ENCODE measurements at regions of chr6 and their contacts with region 1.

Region 1: DNA sequence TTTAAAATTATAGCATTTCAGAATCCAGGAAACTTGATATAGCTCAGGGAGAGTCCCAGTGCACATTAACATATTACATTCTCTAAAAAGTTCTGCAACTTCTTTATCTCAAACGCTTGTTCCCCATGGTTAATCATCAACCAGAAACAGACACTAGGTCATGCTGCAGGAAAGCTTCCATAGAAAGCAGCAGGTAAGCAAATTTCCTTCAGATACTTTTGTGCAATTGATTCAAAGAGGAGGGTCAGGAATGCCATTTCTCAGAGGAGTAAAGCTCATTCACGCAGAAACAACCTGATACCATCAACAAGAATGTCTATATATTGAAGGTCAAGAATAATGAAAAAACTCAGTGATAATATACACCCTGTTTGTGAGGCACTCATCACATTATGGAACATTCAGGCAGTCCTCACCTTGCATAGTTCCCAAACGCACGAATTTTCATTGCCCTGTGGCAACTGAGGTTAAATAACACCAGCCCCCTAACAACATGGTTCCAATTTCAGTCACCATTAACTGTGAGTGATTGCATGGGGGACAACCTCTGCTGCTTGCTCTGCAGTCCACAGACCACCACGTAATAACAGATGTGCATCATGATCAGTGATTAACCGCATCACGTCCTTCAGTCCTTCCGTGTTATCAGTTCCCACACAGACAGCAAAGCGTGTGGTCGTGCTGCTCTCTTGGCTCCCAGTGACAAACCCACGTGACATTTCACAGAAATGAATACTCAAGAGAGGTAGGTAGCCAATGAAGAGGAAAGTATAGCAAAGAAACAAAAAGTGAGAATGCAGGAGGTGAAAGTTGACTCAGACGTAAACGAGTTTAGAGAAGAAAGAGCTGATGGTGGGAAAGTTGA is 95.7 kb downstream of the LY86 start:
- DNase-seq: no peak
- H3K4me3 ChIP-seq: no peak overlapping the region
- H3K27ac ChIP-seq: no peak overlapping the region
- H3K4me1 ChIP-seq: peaks cover 18% of the 10 kb centered on the region
- H3K27me3 ChIP-seq: no peaks in the 10 kb centered on the region
- CTCF ChIP-seq: no peak
- POLR2A ChIP-seq: no peak

Region 2: DNA sequence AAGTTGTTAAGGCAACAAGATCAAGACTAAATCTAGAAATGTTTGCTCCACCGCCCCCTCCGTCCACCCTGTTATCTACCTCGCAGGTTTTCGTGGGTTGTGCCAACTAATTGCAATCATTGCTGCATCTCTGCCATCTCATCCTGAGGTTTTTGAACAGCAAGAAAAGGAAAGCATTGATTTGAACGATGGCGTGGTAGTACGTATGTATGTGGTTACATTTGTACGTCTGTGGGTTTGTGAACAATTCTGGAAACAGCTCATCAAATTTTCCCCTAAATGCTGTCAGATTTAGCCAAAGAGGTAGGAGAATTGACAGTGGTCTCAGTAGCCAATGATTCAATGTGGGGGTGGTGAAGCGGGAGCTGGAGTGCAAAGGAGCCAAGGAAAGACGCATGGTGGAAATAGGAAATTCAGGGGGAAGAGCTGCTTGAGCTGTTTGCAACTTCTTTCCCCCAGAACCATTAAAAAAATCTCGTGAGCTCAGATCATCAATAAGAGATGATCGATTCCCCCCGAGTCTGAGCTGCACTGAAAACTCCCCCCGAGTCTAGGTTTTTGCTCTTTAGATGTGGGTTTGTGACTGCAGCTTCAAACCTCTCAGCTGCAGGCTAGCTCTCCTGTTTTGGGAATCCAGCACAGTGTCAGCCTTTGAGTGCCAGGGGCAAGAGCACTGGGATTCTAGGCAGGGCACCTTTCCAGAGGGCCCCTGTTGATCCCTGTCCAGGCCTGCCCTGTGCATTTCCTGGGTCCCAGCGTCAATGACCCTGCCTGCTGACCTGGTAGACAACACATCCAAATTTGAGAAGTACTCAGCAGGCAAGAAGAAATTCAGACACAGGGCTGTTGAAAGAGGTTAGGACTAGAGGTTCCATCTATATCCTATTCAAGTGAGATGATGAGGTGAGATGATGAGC is 168.3 kb before region 1 on chr6:
- intact Hi-C with region 1: no loop called
- DNase-seq: no peak
- H3K4me3 ChIP-seq: no peak overlapping the region
- H3K27ac ChIP-seq: no peak overlapping the region
- H3K4me1 ChIP-seq: no peaks in the 10 kb centered on the region
- H3K27me3 ChIP-seq: no peaks in the 10 kb centered on the region
- CTCF ChIP-seq: no peak
- POLR2A ChIP-seq: no peak

Region 3: DNA sequence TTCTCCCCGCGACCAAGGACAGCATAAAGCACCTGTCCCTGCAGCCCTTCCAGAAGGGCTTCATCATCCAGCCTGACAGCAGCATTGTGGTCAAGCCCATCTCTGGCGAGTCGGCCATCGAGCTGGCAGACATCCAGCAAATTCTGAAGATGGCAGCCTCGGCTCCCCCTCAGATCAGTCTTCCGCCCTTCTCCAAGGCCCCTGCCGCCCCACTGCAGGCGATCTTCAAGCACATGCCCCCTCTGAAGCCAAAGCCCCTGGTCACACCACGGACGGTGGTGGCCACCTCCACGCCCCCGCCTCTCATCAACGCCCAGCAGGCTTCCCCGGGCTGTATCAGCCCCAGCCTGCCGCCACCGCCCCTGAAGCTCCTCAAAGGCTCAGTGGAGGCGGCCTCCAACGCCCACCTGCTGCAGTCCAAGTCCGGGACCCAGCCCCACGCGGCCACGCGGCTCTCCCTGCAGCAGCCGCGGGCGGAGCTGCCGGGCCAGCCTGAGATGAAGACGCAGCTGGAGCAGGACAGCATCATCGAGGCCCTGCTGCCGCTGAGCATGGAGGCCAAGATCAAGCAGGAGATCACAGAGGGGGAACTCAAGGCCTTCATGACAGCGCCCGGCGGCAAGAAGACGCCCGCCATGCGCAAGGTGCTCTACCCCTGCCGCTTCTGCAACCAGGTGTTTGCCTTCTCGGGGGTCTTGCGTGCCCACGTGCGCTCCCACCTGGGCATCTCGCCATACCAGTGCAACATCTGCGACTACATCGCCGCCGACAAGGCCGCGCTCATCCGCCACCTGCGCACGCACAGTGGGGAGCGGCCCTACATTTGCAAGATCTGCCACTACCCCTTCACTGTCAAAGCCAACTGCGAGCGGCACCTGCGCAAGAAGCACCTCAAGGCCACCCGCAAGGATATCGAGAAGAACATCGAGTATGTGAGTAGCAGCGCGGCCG is 545.5 kb after region 1 on chr6:
- intact Hi-C with region 1: loop called (anchors 1 kb)
- DNase-seq: no peak
- H3K4me3 ChIP-seq: no peak overlapping the region
- H3K27ac ChIP-seq: no peak overlapping the region
- H3K4me1 ChIP-seq: no peaks in the 10 kb centered on the region
- H3K27me3 ChIP-seq: no peaks in the 10 kb centered on the region
- CTCF ChIP-seq: no peak
- POLR2A ChIP-seq: no peak